Right cardiac atrium (tissue), 5 donors: ENCODE measurements at regions of chr4 and their contacts with region 1.

Region 1: DNA sequence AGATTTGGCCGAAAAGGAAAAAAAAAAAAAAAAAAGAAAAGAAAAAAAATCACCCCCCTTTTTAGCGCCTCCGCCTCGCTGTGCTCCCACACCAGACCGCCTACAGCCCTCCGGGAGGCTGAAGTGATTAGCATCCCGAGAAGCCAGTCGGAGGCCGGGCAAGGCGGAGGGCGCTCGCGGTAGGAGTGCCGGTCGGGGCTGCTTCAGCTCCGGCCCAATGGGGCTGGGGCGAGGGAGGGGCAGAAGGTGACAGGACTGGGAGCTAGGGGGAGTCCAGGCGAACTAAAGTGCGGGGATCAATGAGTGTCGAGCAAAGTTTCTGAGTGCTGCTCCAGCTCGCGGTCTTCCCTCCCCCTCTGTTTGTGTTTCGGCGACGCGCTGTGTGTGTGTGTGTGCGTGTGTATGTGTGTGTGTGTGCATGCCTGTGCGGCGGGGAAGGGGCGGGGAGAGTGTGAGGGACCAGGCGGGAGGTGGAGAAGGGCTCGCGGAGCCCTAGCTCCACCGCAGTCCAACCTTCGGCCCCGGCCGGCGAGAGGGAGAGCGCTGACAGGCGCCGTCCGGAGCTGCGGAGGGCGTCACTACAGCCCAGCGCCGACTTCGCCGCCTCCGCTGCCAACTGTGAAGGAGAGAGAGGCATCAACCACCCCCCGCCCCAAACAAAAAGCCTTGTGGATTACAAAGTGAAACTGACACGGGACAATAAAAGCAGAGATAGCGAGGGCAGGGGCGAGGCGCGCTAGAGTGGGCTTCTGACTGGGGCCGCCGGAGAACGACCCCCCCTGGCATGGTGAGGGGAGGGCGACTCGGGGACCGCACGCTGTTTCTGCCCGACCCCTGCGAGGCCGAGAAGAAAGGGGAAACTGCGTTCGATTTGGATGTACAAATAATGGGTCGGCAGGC is at the start of gene FAT4:
- DNase-seq: peak; percentile 98 to 99 (median 98)
- ATAC-seq: peak; percentile 96 to 97
- H3K4me3 ChIP-seq: peak within 1 kb of the TSS; percentile 81
- H3K27ac ChIP-seq: peak within 1 kb of the TSS; percentile 91
- H3K4me1 ChIP-seq: peaks cover 4% of the 10 kb centered on the region
- H3K27me3 ChIP-seq: no peaks in the 10 kb centered on the region
- total RNA-seq, gene FAT4: 13.0 to 18.7 (median 13.6) TPM

Region 2: GRCh38 chr4:124666496-124666895 is 648.4 kb before region 1 on chr4:
- intact Hi-C with region 1: no loop called
- DNase-seq: no peak
- ATAC-seq: no peak
- H3K4me3 ChIP-seq: no peak overlapping the region
- H3K27ac ChIP-seq: no peak overlapping the region
- H3K4me1 ChIP-seq: no peaks in the 10 kb centered on the region
- H3K27me3 ChIP-seq: no peaks in the 10 kb centered on the region

Region 3: DNA sequence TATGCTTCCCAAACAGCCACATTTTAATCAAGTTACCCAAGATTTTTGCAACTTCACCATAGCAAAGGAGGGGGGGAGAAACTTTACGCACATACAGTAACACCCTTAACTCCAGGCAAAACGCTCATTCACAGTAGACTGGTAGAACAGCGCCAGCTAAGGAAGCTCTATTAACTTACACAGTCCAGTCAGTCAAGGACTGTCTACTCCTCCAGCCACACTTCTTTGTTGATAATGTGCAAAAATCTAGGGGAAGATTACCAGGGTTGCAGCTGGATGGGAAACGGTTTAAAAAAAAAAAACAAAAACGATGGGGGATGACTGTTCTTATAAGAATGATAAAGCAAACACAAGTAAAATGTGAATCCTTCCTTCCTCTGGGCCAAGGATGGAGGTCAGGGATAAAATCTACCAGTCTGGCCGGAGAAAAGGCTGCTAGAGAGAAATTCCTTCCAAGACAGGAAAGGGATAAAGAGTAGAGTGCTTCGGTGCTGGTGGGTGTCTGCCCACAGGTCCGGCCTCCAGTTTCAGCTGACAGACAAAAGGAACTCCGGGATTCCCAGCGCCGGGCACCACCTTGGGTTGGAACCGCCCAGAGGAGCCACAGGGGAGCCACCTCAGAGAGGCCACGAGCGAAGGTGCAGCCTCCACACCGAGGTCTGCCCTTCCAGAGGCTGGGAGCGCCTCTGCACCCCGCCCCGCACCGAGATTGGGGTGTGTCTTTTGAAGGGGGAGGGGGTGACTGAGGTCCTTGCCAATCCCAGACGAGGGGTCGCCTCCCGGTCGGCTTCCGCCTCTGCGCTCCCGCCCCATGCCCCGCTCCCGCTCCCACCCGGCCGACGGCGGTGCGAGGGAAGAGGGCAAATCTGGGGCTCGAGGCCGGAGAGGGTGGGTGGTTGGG is 603.2 kb before region 1 on chr4:
- intact Hi-C with region 1: no loop called
- DNase-seq: peak in 1 of 3 donors; percentile 80
- ATAC-seq: peak; percentile 72 to 73
- H3K4me3 ChIP-seq: peak overlapping the region; percentile 72
- H3K27ac ChIP-seq: peak overlapping the region; percentile 88
- H3K4me1 ChIP-seq: peaks cover 3% of the 10 kb centered on the region
- H3K27me3 ChIP-seq: no peaks in the 10 kb centered on the region

Region 4: DNA sequence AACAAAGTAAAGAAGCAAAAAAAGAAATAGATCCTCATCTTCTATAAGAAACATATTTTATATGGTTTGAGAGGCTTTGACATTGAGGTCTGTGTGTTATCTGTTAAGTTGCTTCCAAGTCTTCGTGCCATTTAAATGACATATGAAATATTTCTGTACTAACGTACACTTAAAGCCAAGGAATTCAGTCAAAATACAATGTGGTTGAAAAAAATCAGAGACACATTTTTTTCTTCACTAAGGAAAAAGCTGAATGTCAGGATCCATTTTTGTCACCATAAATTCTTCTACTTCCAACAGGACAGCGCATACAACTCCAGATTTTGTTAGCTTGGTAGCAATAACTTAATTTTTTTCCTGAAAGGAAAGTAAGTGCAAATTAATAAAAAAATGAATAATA is 168.4 kb after region 1 on chr4:
- intact Hi-C with region 1: loop called in 1 of 4 experiments (anchors 5 kb)
- DNase-seq: no peak
- ATAC-seq: no peak
- H3K4me3 ChIP-seq: no peak overlapping the region
- H3K27ac ChIP-seq: no peak overlapping the region
- H3K4me1 ChIP-seq: no peaks in the 10 kb centered on the region
- H3K27me3 ChIP-seq: no peaks in the 10 kb centered on the region

Region 5: DNA sequence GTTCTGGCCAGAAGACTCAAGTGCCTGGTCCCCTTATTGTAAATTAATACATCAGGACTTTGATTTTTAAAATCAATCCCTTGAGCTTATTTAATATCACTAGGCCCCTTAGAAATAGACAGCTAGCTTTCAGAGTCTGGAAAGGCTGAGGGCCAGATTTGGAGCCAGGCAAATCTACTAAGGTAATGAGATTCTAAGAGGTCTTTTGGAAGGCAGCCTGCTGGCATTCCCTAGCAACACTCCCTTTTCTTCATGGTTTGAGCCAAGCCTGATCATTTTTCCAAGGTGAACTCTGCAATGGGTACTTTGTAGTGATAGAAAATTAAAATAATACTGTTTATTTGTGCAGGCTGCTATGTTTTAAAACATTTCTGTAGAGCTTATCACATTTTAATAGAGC is 378.3 kb after region 1 on chr4:
- intact Hi-C with region 1: no loop called
- DNase-seq: no peak
- ATAC-seq: no peak
- H3K4me3 ChIP-seq: no peak overlapping the region
- H3K27ac ChIP-seq: no peak overlapping the region
- H3K4me1 ChIP-seq: no peaks in the 10 kb centered on the region
- H3K27me3 ChIP-seq: no peaks in the 10 kb centered on the region

Region 6: DNA sequence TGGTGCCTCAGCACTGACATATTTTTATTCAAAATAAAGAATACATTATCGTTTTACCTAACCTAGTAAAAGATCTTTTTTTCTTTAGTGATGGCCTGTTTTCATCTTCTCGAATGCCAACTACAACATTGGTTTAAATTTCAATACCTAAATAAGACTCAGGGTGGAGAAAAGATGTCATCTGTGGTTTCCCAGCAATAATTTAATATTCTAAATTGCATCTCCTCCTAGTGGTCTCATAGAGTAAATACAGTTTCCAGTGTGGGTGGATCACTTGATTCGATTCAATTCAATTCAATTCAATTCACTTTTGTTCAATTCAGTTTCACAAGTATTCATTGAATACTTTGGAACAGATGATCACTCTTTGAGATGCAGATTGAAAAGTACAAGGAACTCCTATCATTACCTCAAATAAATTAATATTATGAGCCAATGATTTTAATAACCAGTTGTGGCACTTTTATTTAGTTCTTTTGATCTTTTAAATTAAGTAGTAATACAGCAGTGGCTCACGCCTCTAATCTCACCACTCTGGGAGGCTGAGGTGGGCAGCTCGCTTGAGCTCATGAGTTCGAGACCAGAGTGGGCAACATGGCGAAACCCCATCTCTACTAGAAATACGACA is 427.0 kb after region 1 on chr4:
- intact Hi-C with region 1: loop called in 3 of 4 experiments (anchors 5 kb)
- DNase-seq: no peak
- ATAC-seq: no peak
- H3K4me3 ChIP-seq: no peak overlapping the region
- H3K27ac ChIP-seq: no peak overlapping the region
- H3K4me1 ChIP-seq: no peaks in the 10 kb centered on the region
- H3K27me3 ChIP-seq: no peaks in the 10 kb centered on the region

Region 7: DNA sequence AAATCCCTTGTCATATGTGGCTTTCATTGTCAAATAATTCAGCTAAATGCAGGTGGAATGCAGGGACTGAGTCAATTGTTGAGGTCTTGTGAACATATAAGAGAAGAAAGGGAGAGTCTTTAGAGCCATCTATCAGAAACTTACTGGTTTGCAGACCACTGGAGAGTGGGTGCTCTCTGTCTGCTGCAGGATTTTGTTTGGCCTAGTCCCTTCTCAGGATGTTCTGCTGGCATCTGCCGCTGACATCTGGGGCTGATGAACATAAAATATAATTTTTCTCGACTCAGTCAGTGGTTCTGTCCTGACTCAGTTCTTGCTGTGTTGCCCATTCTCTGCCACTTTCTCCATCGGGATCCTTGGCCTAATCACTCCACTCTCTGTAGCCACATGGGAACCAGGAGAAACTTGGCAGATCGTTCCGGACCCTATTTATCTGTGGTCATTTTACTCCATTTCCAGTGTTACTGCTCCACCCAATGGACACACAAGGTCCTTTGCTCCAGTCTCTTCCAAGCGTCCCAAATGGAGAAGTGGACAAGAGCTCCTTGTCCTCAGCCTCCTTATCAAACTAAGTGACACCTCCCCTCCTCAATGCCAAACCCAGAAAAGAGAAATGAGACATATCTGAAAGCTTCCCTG is 436.0 kb after region 1 on chr4:
- intact Hi-C with region 1: loop called in 3 of 4 experiments (anchors 5 kb)
- DNase-seq: peak; percentile 32 to 60 (median 44)
- ATAC-seq: peak; percentile 95 to 98
- H3K4me3 ChIP-seq: no peak overlapping the region
- H3K27ac ChIP-seq: no peak overlapping the region
- H3K4me1 ChIP-seq: no peaks in the 10 kb centered on the region
- H3K27me3 ChIP-seq: no peaks in the 10 kb centered on the region

Region 8: GRCh38 chr4:126604268-126604867 is 1289.4 kb after region 1 on chr4:
- intact Hi-C with region 1: loop called in 1 of 4 experiments (anchors 10 kb)
- DNase-seq: peak in 2 of 3 donors; percentile 18 to 65
- ATAC-seq: peak in 1 of 2 donors; percentile 57
- H3K4me3 ChIP-seq: no peak overlapping the region
- H3K27ac ChIP-seq: no peak overlapping the region
- H3K4me1 ChIP-seq: no peaks in the 10 kb centered on the region
- H3K27me3 ChIP-seq: no peaks in the 10 kb centered on the region